Activated CD8-positive, alpha-beta T cell treated with anti-CD3 and anti-CD28 coated beads, Interleukin-2, amount 10 ng/mL, durations not matched to agents 7 days and 5 days (primary cell): ENCODE measurements at regions of chr14 and their contacts with region 1.

Region 1: GRCh38 chr14:64294672-64295413 is 672 bp upstream of the ESR2 start:
- DNase-seq: peak; percentile 89
- ATAC-seq: peak; percentile 93
- H3K4me3 Mint-ChIP-seq: peak overlapping the region; percentile 64
- H3K27ac Mint-ChIP-seq: no peak overlapping the region
- H3K4me1 Mint-ChIP-seq: peaks cover 28% of the 10 kb centered on the region
- H3K27me3 Mint-ChIP-seq: peaks cover 32% of the 10 kb centered on the region

Region 2: GRCh38 chr14:64012003-64012402 is 282.8 kb before region 1 on chr14:
- CTCF ChIA-PET with region 1: interaction called, 20 read pairs
- POLR2A ChIA-PET with region 1: no interaction called
- DNase-seq: no peak
- ATAC-seq: no peak
- H3K4me3 Mint-ChIP-seq: no peak overlapping the region
- H3K27ac Mint-ChIP-seq: no peak overlapping the region
- H3K4me1 Mint-ChIP-seq: no peaks in the 10 kb centered on the region
- H3K27me3 Mint-ChIP-seq: no peaks in the 10 kb centered on the region

Region 3: DNA sequence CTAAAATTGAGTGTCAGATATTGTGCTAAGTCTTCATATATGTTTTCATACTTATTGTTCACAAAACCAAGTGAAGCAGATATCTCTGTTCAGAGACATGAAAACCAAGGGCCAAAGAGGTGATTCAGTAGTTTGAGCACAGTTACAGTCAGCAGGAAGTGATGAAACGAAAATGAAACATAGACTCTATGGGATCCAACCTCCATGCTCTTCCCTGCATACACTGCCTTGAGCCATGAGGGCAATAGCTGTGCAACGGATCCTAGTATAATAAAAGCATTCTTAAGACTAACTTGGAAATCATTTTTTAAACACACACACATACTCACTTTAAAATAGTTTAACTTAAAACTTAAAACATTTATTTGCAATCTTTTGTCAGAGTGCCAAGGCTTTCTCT is 28.6 kb before region 1 on chr14:
- CTCF ChIA-PET with region 1: interaction called, 11 read pairs
- POLR2A ChIA-PET with region 1: no interaction called
- DNase-seq: no peak
- ATAC-seq: peak; percentile 81
- H3K4me3 Mint-ChIP-seq: no peak overlapping the region
- H3K27ac Mint-ChIP-seq: peak overlapping the region; percentile 65
- H3K4me1 Mint-ChIP-seq: peaks cover 19% of the 10 kb centered on the region
- H3K27me3 Mint-ChIP-seq: no peaks in the 10 kb centered on the region